CD4-positive, alpha-beta T cell (primary cell): ENCODE measurements at regions of chr5 and their contacts with region 1.

Region 1: DNA sequence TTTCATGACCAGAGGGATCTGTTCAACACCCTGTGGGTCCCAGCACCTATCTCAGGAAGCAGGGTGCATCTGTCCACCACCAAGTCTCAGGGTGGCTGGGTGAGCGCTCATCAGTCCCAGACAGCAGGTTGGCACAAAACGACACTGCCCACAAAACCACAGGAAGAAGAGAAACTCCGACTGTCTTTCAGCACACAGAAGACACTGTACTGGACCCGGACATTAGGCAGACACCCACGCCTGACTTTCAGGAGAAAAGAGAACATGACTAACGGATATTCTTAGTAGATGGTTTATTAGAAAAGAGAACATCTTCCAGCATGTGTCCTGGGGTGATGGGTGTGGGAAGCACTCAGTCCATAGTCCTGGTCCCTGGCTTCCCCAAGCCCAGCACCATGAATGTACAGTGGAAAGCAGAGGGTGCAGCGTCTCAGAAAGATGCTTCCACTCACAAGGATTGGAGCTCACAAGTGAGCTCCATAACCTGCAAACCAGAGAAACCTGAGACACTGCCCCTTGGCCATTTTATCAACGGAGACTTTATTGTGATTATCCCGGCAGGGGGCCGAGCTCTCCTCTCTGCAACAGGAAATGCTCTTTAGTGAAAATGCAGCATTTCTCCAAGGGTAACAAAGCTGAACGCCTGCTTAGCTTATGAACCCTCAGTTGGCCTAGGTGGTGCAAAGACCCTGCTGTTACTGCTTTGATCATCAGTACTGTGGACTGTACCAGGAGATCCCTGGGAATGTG is 35.8 kb upstream of the LCP2 start:
- DNase-seq: peak in 13 of 14 experiments; percentile 39 to 89 (median 56)
- ATAC-seq: peak; percentile 39
- H3K4me3 ChIP-seq: peak overlapping the region; percentile 2
- H3K4me3 Mint-ChIP-seq: peak overlapping the region; percentile 78
- H3K27ac ChIP-seq: peak overlapping the region; percentile 95 to 97
- H3K27ac Mint-ChIP-seq: no peak overlapping the region
- H3K4me1 ChIP-seq: peaks cover 96% of the 10 kb centered on the region
- H3K4me1 Mint-ChIP-seq: peaks cover 30% of the 10 kb centered on the region
- H3K27me3 ChIP-seq: no peaks in the 10 kb centered on the region
- H3K27me3 Mint-ChIP-seq: no peaks in the 10 kb centered on the region
- CTCF ChIP-seq: no peak

Region 2: DNA sequence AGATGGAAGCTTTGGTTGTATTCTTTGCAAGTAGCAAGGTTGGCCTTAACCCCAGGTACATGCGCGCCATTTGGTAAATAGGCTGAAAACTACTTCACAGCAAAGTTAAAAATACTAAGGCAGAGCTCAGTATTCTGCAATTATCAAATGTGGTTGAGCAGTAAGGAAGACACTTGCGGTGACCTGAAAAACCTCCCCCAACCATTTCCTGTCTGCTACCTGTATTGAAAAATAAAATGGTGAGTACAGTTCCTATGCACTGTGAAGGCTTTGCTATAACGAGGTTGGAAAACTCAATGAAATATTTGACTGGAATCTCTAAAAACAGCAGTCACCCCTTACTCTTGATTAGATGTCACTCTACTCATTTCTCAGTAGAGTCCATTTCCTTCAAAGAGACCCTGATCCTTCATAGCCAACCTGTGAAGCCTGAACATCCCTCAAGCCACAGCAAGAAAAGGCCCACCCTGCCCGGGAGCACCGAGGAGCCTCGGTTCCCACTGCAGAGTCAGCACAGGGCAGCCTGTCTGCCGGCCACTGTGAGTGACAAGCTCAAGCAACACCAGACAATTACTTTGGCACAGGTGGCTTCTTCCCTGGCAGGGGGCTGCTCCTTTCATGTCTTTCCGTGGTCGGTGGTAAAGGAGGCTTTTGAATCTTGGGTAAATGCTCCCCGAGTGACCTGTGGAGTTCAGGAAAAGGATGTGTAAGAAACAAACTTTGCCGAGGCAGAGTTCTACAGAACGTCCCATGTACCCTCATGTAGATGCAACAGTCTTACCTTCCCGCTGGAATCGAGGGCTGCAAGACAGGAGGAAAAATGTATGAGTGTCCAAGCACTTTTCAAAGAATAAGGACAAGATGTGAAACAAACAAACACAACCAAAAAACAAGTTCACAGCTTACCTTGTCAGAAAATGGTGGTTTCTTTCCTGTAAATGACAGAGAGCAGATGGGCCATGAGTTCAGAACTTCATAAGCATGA is 71.0 kb before region 1 on chr5:
- CTCF ChIA-PET with region 1: interaction called, 32 read pairs
- POLR2A ChIA-PET with region 1: interaction called, 71 read pairs
- intact Hi-C with region 1: no loop called
- DNase-seq: peak in 9 of 14 experiments; percentile 40 to 88 (median 61)
- ATAC-seq: peak; percentile 88
- H3K4me3 ChIP-seq: peak overlapping the region; percentile 11
- H3K4me3 Mint-ChIP-seq: peak overlapping the region; percentile 52
- H3K27ac ChIP-seq: peak overlapping the region; percentile 62 to 88
- H3K27ac Mint-ChIP-seq: peak overlapping the region; percentile 96
- H3K4me1 ChIP-seq: peaks cover 63% of the 10 kb centered on the region
- H3K4me1 Mint-ChIP-seq: peaks cover 91% of the 10 kb centered on the region
- H3K27me3 ChIP-seq: no peaks in the 10 kb centered on the region
- H3K27me3 Mint-ChIP-seq: no peaks in the 10 kb centered on the region
- CTCF ChIP-seq: no peak

Region 3: GRCh38 chr5:170278611-170279452 is 54.5 kb before region 1 on chr5:
- CTCF ChIA-PET with region 1: interaction called, 73 read pairs
- POLR2A ChIA-PET with region 1: interaction called, 174 read pairs
- intact Hi-C with region 1: loop called in 1 of 2 experiments (anchors 1 kb)
- DNase-seq: peak; percentile 76 to 95 (median 84)
- ATAC-seq: peak; percentile 67
- H3K4me3 ChIP-seq: peak overlapping the region; percentile 28
- H3K4me3 Mint-ChIP-seq: peak overlapping the region; percentile 85
- H3K27ac ChIP-seq: peak overlapping the region; percentile 63 to 92
- H3K27ac Mint-ChIP-seq: peak overlapping the region; percentile 96
- H3K4me1 ChIP-seq: peaks cover 98% of the 10 kb centered on the region
- H3K4me1 Mint-ChIP-seq: peaks cover 92% of the 10 kb centered on the region
- H3K27me3 ChIP-seq: no peaks in the 10 kb centered on the region
- H3K27me3 Mint-ChIP-seq: no peaks in the 10 kb centered on the region
- CTCF ChIP-seq: no peak

Region 4: GRCh38 chr5:170293273-170293672 is 40.1 kb before region 1 on chr5:
- CTCF ChIA-PET with region 1: interaction called, 65 read pairs
- POLR2A ChIA-PET with region 1: interaction called, 236 read pairs
- intact Hi-C with region 1: loop called (anchors 1 to 2 kb)
- DNase-seq: peak in 5 of 14 experiments; percentile 39 to 83 (median 74)
- ATAC-seq: peak; percentile 10
- H3K4me3 ChIP-seq: peak overlapping the region; percentile 66
- H3K4me3 Mint-ChIP-seq: peak overlapping the region; percentile 98
- H3K27ac ChIP-seq: peak overlapping the region; percentile 49 to 98
- H3K27ac Mint-ChIP-seq: peak overlapping the region; percentile 96
- H3K4me1 ChIP-seq: peaks cover 66% of the 10 kb centered on the region
- H3K4me1 Mint-ChIP-seq: peaks cover 82% of the 10 kb centered on the region
- H3K27me3 ChIP-seq: no peaks in the 10 kb centered on the region
- H3K27me3 Mint-ChIP-seq: no peaks in the 10 kb centered on the region
- CTCF ChIP-seq: no peak

Region 5: DNA sequence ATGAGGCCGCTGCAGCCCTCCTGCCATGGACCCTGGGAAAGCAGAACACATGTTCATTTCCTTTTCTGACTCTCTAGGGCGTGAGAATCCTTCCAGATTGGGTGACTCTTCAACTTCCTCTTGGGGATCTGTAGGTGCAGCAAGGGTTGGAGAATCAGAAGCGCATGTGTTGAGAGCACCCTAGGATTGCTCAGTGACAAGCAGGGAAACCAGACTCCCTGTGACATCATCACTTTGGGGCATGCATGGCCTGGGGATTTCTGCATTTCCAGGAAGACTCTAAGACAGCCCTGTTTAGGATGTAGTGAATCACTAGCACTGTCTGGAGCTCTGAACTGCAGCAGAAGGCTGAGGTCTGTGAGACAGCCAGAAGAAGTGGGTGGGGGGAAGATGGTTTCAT is 20.7 kb before region 1 on chr5:
- CTCF ChIA-PET with region 1: interaction called, 9 read pairs
- POLR2A ChIA-PET with region 1: interaction called, 50 read pairs
- intact Hi-C with region 1: loop called (anchors 1 to 2 kb)
- DNase-seq: peak in 8 of 14 experiments; percentile 44 to 92 (median 61)
- ATAC-seq: peak; percentile 87
- H3K4me3 ChIP-seq: peak overlapping the region; percentile 6
- H3K4me3 Mint-ChIP-seq: peak overlapping the region; percentile 71
- H3K27ac ChIP-seq: peak overlapping the region; percentile 80 to 83
- H3K27ac Mint-ChIP-seq: peak overlapping the region; percentile 91
- H3K4me1 ChIP-seq: peaks cover 56% of the 10 kb centered on the region
- H3K4me1 Mint-ChIP-seq: peaks cover 87% of the 10 kb centered on the region
- H3K27me3 ChIP-seq: no peaks in the 10 kb centered on the region
- H3K27me3 Mint-ChIP-seq: no peaks in the 10 kb centered on the region
- CTCF ChIP-seq: no peak

Region 6: GRCh38 chr5:170522211-170523133 is 189.1 kb after region 1 on chr5:
- CTCF ChIA-PET with region 1: no interaction called
- POLR2A ChIA-PET with region 1: no interaction called
- intact Hi-C with region 1: no loop called
- DNase-seq: peak in 1 of 14 experiments; percentile 4
- ATAC-seq: no peak
- H3K4me3 ChIP-seq: no peak overlapping the region
- H3K4me3 Mint-ChIP-seq: no peak overlapping the region
- H3K27ac ChIP-seq: no peak overlapping the region
- H3K27ac Mint-ChIP-seq: no peak overlapping the region
- H3K4me1 ChIP-seq: no peaks in the 10 kb centered on the region
- H3K4me1 Mint-ChIP-seq: no peaks in the 10 kb centered on the region
- H3K27me3 ChIP-seq: peaks cover 0 to 8% of the 10 kb centered on the region in 2 experiments
- H3K27me3 Mint-ChIP-seq: peaks cover 14% of the 10 kb centered on the region
- CTCF ChIP-seq: no peak